Endothelial cell of umbilical vein (primary cell): ENCODE measurements at regions of chr1 and their contacts with region 1.

Region 1: GRCh38 chr1:159924981-159925712 is at the start of gene TAGLN2:
- DNase-seq: peak; percentile 93
- H3K4me3 ChIP-seq: peak within 1 kb of the TSS; percentile 46 to 78 (median 71)
- H3K27ac ChIP-seq: peak within 1 kb of the TSS; percentile 98
- H3K4me1 ChIP-seq: peaks cover 27% of the 10 kb centered on the region
- H3K27me3 ChIP-seq: no peaks in the 10 kb centered on the region
- CTCF ChIP-seq: no peak
- POLR2A ChIP-seq: peak; percentile 98
- total RNA-seq, gene TAGLN2: 646 and 750 TPM in 2 replicates

Region 2: DNA sequence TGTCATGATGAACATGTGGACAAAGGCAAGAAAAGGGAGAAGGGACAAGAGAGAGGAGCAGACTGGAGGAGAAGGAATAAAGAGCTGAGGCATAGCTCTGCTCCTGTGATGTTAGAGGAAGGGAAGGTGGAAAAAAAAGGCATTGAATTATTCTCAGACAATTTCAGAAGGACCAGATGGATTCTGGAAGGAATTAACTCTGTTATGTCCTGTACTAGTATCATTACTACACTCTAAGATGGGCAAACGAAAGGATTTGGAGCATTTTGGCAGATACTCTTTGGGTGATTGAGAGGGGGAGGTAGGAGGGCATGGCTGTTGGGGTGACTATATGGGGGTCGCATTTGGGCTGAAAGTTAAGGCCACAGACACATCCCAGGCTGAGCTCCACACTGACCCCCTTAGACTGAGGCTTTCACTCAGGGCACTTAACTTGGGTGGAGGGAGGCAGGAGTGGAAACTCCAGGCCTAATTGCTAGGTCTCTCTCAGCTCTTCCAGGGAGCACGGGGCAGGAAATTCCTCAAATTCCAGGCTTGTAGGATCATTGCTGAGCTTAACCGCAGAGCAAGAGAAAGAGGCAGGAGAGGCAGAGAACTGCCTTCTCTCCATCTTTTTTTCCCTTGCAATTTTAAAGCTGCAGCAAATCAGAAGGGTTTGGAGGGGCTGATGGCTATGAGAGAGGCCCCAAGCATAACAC is 1905.8 kb before region 1 on chr1:
- CTCF ChIA-PET with region 1: no interaction called
- POLR2A ChIA-PET with region 1: no interaction called
- dilution Hi-C with region 1: no loop called
- intact Hi-C with region 1: loop called (anchors 10 kb)
- DNase-seq: peak; percentile 87
- H3K4me3 ChIP-seq: peak overlapping the region in 1 of 3 experiments; percentile 2
- H3K27ac ChIP-seq: peak overlapping the region; percentile 95
- H3K4me1 ChIP-seq: peaks cover 49% of the 10 kb centered on the region
- H3K27me3 ChIP-seq: no peaks in the 10 kb centered on the region
- CTCF ChIP-seq: no peak
- POLR2A ChIP-seq: peak; percentile 38

Region 3: DNA sequence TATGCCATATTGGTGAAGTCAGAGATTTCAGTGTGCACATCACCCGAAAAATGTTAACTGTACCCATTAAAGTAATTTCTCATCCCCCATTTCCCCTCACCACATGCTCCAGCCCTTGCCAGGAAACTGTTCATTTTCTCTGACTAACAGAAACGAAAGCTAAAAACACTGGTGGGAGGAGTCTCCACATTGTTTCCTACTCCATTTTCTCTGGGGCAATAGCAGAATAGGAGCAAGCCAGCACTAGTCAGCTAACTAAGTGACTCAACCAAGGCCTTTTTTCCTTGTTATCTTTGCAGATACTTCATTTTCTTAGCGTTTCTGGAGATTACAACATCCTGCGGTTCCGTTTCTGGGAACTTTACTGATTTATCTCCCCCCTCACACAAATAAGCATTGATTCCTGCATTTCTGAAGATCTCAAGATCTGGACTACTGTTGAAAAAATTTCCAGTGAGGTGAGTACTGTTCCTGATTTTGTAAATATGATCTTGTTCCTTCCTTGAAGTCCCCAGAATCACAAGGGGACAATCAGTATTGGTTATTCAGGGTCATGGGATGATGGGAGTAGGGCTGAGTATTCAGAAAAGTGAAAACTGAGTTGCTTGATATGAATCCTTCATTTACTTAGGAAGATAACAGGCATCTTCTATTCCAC is 915.3 kb before region 1 on chr1 and contains the start of gene IFI16:
- CTCF ChIA-PET with region 1: no interaction called
- POLR2A ChIA-PET with region 1: no interaction called
- dilution Hi-C with region 1: no loop called
- intact Hi-C with region 1: loop called (anchors 5 kb)
- DNase-seq: peak; percentile 96
- H3K4me3 ChIP-seq: peak within 1 kb of the TSS; percentile 56 to 99 (median 99)
- H3K27ac ChIP-seq: peak within 1 kb of the TSS; percentile 86
- H3K4me1 ChIP-seq: peaks cover 37% of the 10 kb centered on the region
- H3K27me3 ChIP-seq: no peaks in the 10 kb centered on the region
- CTCF ChIP-seq: no peak
- POLR2A ChIP-seq: peak; percentile 83
- total RNA-seq, gene IFI16: 174 and 183 TPM in 2 replicates

Region 4: DNA sequence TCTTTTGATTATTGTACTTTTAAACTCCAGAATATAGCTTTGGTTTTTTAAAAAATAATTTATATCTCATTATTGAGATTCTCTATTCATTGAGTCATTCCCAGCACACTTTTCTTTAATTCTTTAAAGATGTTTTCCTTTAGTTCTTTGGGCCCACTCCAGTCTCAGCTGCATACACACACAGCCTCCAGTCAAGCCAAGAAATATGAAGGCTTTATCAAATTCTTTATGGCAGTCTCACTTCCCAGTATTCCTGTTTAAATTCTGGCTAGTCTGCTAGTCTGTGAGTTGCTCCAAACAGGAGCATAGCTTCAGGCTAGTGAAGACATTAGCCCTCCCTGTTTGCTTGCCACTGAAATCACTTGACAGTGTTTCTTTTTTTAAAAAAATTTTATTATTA is 271.9 kb before region 1 on chr1:
- CTCF ChIA-PET with region 1: no interaction called
- POLR2A ChIA-PET with region 1: no interaction called
- dilution Hi-C with region 1: no loop called
- intact Hi-C with region 1: loop called (anchors 5 kb)
- DNase-seq: peak; percentile 88
- H3K4me3 ChIP-seq: no peak overlapping the region
- H3K27ac ChIP-seq: peak overlapping the region; percentile 93
- H3K4me1 ChIP-seq: peaks cover 29% of the 10 kb centered on the region
- H3K27me3 ChIP-seq: no peaks in the 10 kb centered on the region
- CTCF ChIP-seq: no peak
- POLR2A ChIP-seq: no peak

Region 5: GRCh38 chr1:159821171-159821867 is 103.8 kb before region 1 on chr1:
- CTCF ChIA-PET with region 1: no interaction called
- POLR2A ChIA-PET with region 1: no interaction called
- dilution Hi-C with region 1: no loop called
- intact Hi-C with region 1: no loop called
- DNase-seq: no peak
- H3K4me3 ChIP-seq: no peak overlapping the region
- H3K27ac ChIP-seq: no peak overlapping the region
- H3K4me1 ChIP-seq: peaks cover 3% of the 10 kb centered on the region
- H3K27me3 ChIP-seq: peaks cover 25 to 31% of the 10 kb centered on the region in 2 experiments
- CTCF ChIP-seq: no peak
- POLR2A ChIP-seq: no peak

Region 6: GRCh38 chr1:159945483-159946241 is 20.5 kb after region 1 on chr1 and contains the start of gene IGSF9:
- CTCF ChIA-PET with region 1: interaction called, 3 read pairs
- POLR2A ChIA-PET with region 1: interaction called, 4 read pairs
- dilution Hi-C with region 1: no loop called
- intact Hi-C with region 1: loop called (anchors 1 kb)
- DNase-seq: peak; percentile 85
- H3K4me3 ChIP-seq: peak within 1 kb of the TSS in 2 of 3 experiments; percentile 15 to 16
- H3K27ac ChIP-seq: no peak within 1 kb of the TSS
- H3K4me1 ChIP-seq: peaks cover 5% of the 10 kb centered on the region
- H3K27me3 ChIP-seq: peaks cover 22 to 36% of the 10 kb centered on the region in 2 experiments
- CTCF ChIP-seq: peak; percentile 47 to 72
- POLR2A ChIP-seq: no peak
- total RNA-seq, gene IGSF9: 0.15 and 0.16 TPM in 2 replicates

Region 7: DNA sequence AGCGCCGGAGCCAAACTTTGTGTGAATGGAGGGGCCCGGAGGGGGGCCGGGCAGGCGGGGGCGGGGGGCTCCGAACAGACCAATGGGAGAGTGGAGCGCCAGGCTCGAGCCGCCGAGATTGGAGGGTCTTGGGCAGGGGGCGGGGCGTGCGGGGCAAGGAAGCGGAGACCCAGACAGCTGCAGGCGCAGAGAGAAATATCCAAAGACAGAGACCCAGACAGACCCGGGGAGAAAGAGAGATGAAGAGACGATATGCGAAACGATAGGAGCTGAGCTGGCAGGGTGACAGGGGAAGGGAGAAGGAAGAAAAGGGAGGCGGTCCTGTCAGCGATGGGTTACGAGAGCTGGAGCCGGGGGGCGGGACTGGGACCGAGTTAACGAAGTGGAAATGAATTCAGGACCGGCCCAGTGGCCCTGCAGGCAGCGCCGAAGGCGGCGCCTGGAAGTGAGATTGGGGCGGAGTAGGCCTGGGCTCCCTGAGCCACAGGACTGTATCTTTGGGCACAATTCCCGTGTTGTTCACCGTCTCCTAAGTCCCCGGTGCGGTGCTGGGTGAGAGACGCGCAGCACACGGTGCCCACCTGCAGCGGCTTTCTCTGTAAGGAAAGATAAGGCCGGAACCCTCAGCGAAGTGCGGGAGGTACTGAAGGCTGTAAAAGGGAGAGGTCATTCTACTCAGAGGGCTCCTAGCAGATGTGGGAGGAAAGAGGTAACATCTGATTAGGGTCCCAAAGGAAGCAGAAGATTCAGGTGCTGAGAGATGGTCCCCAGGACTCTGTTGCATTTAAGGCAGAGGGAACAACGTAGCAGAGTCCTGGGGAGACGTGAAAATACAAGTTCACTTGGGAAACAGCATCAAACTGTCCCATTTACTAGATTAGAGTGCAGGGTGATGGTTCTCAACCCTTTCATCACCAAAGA is 145.4 kb after region 1 on chr1:
- CTCF ChIA-PET with region 1: no interaction called
- POLR2A ChIA-PET with region 1: no interaction called
- dilution Hi-C with region 1: no loop called
- intact Hi-C with region 1: no loop called
- DNase-seq: peak; percentile 74
- H3K4me3 ChIP-seq: peak overlapping the region; percentile 31 to 69 (median 45)
- H3K27ac ChIP-seq: no peak overlapping the region
- H3K4me1 ChIP-seq: peaks cover 7% of the 10 kb centered on the region
- H3K27me3 ChIP-seq: peaks cover 25 to 28% of the 10 kb centered on the region in 2 experiments
- CTCF ChIP-seq: no peak
- POLR2A ChIP-seq: no peak